Naive thymus-derived CD8-positive, alpha-beta T cell (primary cell): ENCODE measurements at regions of chr5 and their contacts with region 1.

Region 1: DNA sequence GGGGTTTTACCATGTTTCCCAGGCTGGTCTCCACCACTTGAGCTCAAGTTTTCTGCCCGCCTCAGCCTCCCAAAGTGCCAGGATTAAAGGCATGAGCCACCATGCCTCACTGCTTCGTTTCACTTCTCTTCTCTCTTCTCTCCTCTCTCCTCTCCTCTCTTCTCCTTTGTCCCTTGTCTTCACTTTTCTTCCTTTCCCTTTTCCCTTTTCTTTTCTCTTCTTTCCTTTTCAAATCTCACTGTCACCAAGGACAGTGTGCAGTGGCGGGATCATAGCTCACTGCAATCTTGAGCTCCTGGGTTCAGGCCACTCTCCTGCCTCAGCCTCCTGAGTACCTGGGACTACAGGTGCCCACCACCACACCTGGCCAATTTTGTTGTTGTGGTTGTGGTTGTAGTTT is 49.5 kb downstream of the SLF1 start:
- DNase-seq: no peak
- ATAC-seq: no peak
- H3K4me3 Mint-ChIP-seq: no peak overlapping the region
- H3K27ac Mint-ChIP-seq: no peak overlapping the region
- H3K4me1 Mint-ChIP-seq: peaks cover 0 to 3% (median under 1%) of the 10 kb centered on the region in 4 donors
- H3K27me3 Mint-ChIP-seq: no peaks in the 10 kb centered on the region

Region 2: GRCh38 chr5:94632024-94632423 is 35.9 kb before region 1 on chr5:
- POLR2A ChIA-PET with region 1: interaction called, 10 read pairs
- DNase-seq: no peak
- ATAC-seq: no peak
- H3K4me3 Mint-ChIP-seq: peak overlapping the region in 1 of 10 donors; percentile 24
- H3K27ac Mint-ChIP-seq: peak overlapping the region in 1 of 10 donors; percentile 10
- H3K4me1 Mint-ChIP-seq: peaks cover 10 to 31% (median 18%) of the 10 kb centered on the region in 4 donors
- H3K27me3 Mint-ChIP-seq: no peaks in the 10 kb centered on the region